IMR-90 (cell line): ENCODE measurements at regions of chr1 and their contacts with region 1.

Region 1: DNA sequence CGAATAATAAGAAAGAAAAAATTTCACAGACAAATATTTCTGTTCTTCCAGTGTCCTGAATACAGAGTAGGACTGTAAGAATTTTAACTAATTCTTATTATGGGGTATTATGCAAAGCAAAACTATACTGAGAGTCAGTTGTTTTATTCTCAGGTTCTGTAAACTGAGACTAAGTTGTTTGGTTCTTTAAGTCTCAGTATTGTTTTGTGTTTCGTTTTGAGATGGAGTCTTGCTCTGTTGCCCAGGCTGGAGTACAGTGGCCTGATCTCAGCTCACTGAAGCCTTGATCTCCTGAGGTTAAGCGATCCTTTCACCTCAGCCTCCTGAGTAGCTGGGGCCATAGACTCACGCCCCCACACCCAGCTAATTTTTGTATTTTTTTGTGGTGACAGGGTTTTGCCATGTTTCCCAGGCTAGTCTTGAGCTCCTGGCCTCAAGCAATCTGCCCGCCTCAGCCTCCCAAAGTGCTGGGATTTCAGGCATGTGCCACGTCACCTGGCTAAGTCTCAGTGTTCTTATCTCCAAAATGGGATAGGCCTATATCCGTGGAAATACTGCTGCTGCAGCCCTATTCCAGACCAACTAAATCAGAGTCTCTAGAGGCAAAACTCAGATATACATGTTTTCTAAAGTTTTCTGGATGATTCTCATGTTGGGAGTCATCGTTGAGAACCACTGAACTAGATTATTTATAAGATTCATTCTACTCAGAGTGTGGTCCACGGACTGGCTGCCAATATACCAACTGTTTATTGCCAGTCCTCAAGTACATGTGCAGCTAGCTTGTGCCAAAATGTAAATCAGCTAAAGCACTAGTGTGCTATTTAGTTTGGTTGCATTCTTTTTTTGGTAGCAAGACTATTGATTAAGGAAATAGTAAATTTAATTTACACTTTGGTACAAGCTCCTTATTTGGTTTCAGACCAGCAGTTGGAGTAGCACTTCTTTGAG is 116.6 kb downstream of the HS2ST1 start:
- DNase-seq: no peak
- ATAC-seq: no peak
- H3K4me3 ChIP-seq: no peak overlapping the region
- H3K27ac ChIP-seq: no peak overlapping the region
- H3K4me1 ChIP-seq: no peaks in the 10 kb centered on the region
- H3K27me3 ChIP-seq: no peaks in the 10 kb centered on the region
- CTCF ChIP-seq: no peak
- POLR2A ChIP-seq: no peak
- RAD21 ChIP-seq: no peak

Region 2: DNA sequence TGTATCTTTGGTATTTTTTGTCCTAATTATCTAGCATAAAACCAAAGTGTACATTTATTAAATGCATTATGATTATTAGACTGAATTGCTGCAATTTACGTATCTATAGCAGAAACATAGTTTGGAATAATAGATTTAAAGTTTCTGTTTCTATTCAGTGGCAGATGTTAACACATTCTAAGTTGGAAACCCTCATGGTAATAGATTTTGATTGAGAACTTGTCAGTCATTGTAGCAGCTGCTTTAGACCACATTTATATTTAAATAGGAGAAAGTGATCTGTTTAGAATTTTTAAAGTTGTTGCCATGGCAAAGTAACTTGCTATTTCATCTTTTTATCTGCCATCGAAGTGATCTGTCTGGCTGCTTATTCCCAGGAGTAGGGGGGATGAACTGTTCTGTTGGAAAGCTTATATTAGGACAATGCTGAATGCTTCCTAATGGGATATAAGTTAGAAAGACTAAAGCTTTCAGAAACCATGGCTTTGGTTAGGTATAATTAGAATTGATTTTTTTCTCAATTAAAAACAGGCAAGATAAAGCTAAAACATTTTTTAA is 54.9 kb before region 1 on chr1:
- CTCF ChIA-PET with region 1: no interaction called
- POLR2A ChIA-PET with region 1: no interaction called
- dilution Hi-C with region 1: no loop called
- in situ Hi-C with region 1: no loop called
- intact Hi-C with region 1: loop called (anchors 2 kb)
- DNase-seq: no peak
- ATAC-seq: no peak
- H3K4me3 ChIP-seq: no peak overlapping the region
- H3K27ac ChIP-seq: no peak overlapping the region
- H3K4me1 ChIP-seq: no peaks in the 10 kb centered on the region
- H3K27me3 ChIP-seq: no peaks in the 10 kb centered on the region
- CTCF ChIP-seq: no peak
- POLR2A ChIP-seq: no peak
- RAD21 ChIP-seq: no peak

Region 3: DNA sequence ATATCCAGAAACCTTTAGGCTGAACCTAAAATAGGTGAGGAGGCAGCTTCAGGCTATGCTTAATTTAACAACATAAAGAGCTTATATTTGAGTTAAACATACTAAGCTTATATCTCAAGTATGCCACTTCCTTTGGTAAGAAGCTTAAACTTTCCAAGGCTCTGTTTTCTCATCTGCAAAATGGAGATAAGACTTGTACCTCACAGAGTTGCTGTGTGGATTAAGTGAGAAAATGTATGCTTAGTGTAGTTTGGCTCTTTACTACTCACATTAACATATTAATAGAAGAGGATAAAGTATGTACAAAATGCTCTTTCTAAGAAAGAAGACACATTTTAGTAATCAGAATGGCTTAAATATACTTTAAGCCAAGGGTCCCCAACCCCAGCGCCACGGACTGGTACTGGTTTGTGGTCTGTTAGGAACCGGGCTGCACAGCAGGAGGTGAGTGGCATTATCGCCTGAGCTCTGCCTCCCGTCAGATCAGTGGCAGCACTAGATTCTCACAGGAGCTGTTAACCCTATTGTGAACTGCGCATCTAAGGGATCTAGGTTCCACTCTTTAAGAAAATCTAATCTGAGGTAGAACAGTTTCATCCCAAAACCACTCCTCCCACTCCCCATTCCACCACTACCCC is 39.3 kb before region 1 on chr1:
- CTCF ChIA-PET with region 1: no interaction called
- POLR2A ChIA-PET with region 1: interaction called, 10 read pairs
- dilution Hi-C with region 1: no loop called
- in situ Hi-C with region 1: no loop called
- intact Hi-C with region 1: no loop called
- DNase-seq: no peak
- ATAC-seq: no peak
- H3K4me3 ChIP-seq: no peak overlapping the region
- H3K27ac ChIP-seq: no peak overlapping the region
- H3K4me1 ChIP-seq: no peaks in the 10 kb centered on the region
- H3K27me3 ChIP-seq: no peaks in the 10 kb centered on the region
- CTCF ChIP-seq: no peak
- POLR2A ChIP-seq: no peak
- RAD21 ChIP-seq: no peak